HEK293 (cell line): ENCODE measurements at regions of chr1 and their contacts with region 1.

Region 1: GRCh38 chr1:26500488-26501175 is 28.4 kb downstream of the HMGN2 start:
- H3K4me3 ChIP-seq: peak overlapping the region; percentile 74
- H3K27ac ChIP-seq: peak overlapping the region; percentile 81
- H3K4me1 ChIP-seq: no peaks in the 10 kb centered on the region
- CTCF ChIP-seq: 0 out of 2 replicates have a peak, but pooled peaks have one; percentile 47

Region 2: GRCh38 chr1:26431979-26432695 is 68.5 kb before region 1 on chr1 and contains the start of gene DHDDS:
- CTCF ChIA-PET with region 1: no interaction called
- POLR2A ChIA-PET with region 1: interaction called, 13 read pairs
- H3K4me3 ChIP-seq: peak within 1 kb of the TSS; percentile 64
- H3K27ac ChIP-seq: peak within 1 kb of the TSS; percentile 1; the same call in 1 of the 2 replicates
- H3K4me1 ChIP-seq: peaks cover 5% of the 10 kb centered on the region
- CTCF ChIP-seq: no peak

Region 3: GRCh38 chr1:26472901-26473845 is 27.5 kb before region 1 on chr1:
- CTCF ChIA-PET with region 1: interaction called, 6 read pairs
- POLR2A ChIA-PET with region 1: interaction called, 19 read pairs
- H3K4me3 ChIP-seq: peak overlapping the region; percentile 88
- H3K27ac ChIP-seq: peak overlapping the region; percentile 100; the same call in 1 of the 2 replicates
- H3K4me1 ChIP-seq: peaks cover 2% of the 10 kb centered on the region; the same call in 1 of the 2 replicates
- CTCF ChIP-seq: no peak

Region 4: GRCh38 chr1:26490158-26490557 is 10.5 kb before region 1 on chr1:
- CTCF ChIA-PET with region 1: interaction called, 22 read pairs
- POLR2A ChIA-PET with region 1: interaction called, 10 read pairs
- H3K4me3 ChIP-seq: no peak overlapping the region
- H3K27ac ChIP-seq: no peak overlapping the region
- H3K4me1 ChIP-seq: no peaks in the 10 kb centered on the region
- CTCF ChIP-seq: no peak

Region 5: DNA sequence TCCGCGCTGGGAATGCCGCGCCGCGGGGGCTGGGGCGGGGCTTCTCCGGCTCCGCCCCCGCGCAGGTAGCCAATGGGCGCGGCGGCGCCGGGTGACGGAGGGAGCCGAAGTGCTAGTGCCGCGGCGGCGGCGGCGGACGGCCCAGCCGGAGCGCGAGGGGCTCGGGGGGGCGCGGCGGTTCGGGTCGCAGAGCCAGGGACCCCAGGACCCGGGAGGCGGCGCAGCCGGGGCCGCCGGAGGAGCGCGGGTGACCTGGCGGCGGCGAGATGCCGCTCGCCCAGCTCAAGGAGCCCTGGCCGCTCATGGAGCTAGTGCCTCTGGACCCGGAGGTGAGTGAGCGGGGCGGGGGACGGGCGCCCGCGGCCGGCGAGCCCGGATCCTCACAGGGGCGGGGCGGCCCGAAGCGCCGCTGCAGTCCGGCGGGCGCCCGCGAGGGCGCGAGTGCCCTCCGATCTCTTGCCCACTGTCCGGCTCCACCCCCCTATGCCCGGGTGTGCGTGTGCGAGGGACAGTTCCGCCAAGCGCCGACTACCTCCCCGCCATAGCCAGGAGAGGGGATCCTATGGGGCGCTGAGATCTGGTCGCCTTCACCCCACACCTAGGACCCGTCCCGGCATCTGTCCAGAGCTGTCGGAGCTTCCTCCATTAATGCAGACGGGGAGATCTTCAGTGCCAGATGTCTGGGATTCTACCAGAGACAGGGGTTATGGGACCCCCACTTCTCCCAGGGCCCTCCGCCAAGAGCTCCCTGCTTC is 29.2 kb after region 1 on chr1 and contains the start of gene RPS6KA1:
- CTCF ChIA-PET with region 1: interaction called, 19 read pairs
- POLR2A ChIA-PET with region 1: interaction called, 24 read pairs
- H3K4me3 ChIP-seq: peak within 1 kb of the TSS; percentile 60
- H3K27ac ChIP-seq: peak within 1 kb of the TSS; percentile 47; the same call in 1 of the 2 replicates
- H3K4me1 ChIP-seq: 0 out of 2 replicates have a peak, but pooled peaks cover 6% of the 10 kb centered on the region
- CTCF ChIP-seq: no peak

Region 6: GRCh38 chr1:26538480-26539412 is 38.1 kb after region 1 on chr1:
- CTCF ChIA-PET with region 1: interaction called, 18 read pairs
- POLR2A ChIA-PET with region 1: interaction called, 8 read pairs
- H3K4me3 ChIP-seq: no peak overlapping the region
- H3K27ac ChIP-seq: no peak overlapping the region
- H3K4me1 ChIP-seq: no peaks in the 10 kb centered on the region
- CTCF ChIP-seq: peak; percentile 48; the same call in 1 of the 2 replicates